AG04450 (cell line): ENCODE measurements at regions of chr1 and their contacts with region 1.

Region 1: GRCh38 chr1:175154629-175155472 is 37.7 kb downstream of the KIAA0040 start:
- DNase-seq: no peak
- H3K4me3 ChIP-seq: no peak overlapping the region
- H3K27ac ChIP-seq: no peak overlapping the region
- H3K27me3 ChIP-seq: peaks cover 4% of the 10 kb centered on the region
- CTCF ChIP-seq: peak; percentile 84

Region 2: GRCh38 chr1:175023043-175023921 is 131.6 kb before region 1 on chr1 and contains the start of gene MRPS14:
- CTCF ChIA-PET with region 1: interaction called, 11 read pairs
- POLR2A ChIA-PET with region 1: no interaction called
- DNase-seq: peak; percentile 98
- H3K4me3 ChIP-seq: peak within 1 kb of the TSS; percentile 96
- H3K27ac ChIP-seq: peak within 1 kb of the TSS; percentile 80
- H3K27me3 ChIP-seq: no peaks in the 10 kb centered on the region
- CTCF ChIP-seq: no peak
- polyA plus RNA-seq, gene MRPS14: 37.4 and 40.8 TPM in 2 replicates

Region 3: DNA sequence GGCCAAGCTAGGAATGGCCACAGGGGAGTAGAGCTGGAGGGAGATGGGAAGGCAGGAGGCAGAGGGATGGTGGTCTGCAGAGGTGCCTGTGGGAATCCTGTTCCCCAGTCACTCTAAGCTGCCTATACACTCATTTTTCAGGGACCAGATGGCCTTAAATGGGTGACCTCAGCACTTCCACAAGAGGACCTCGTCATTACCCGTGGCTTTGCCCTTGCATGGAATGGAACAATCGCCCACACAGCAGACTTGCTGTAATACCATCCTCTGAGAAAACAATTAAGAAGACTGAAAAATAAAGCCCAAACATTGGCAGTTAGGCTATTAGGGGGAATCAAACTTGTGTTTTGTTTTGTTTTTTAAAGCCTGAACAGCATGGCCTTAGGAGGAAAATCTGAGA is 100.1 kb before region 1 on chr1:
- CTCF ChIA-PET with region 1: no interaction called
- POLR2A ChIA-PET with region 1: no interaction called
- DNase-seq: no peak
- H3K4me3 ChIP-seq: no peak overlapping the region
- H3K27ac ChIP-seq: no peak overlapping the region
- H3K27me3 ChIP-seq: no peaks in the 10 kb centered on the region
- CTCF ChIP-seq: no peak

Region 4: GRCh38 chr1:175075572-175076568 is 79.0 kb before region 1 on chr1:
- CTCF ChIA-PET with region 1: no interaction called
- POLR2A ChIA-PET with region 1: no interaction called
- DNase-seq: no peak
- H3K4me3 ChIP-seq: no peak overlapping the region
- H3K27ac ChIP-seq: no peak overlapping the region
- H3K27me3 ChIP-seq: no peaks in the 10 kb centered on the region
- CTCF ChIP-seq: no peak

Region 5: GRCh38 chr1:175124861-175125260 is 30.0 kb before region 1 on chr1:
- CTCF ChIA-PET with region 1: interaction called, 10 read pairs
- POLR2A ChIA-PET with region 1: no interaction called
- DNase-seq: no peak
- H3K4me3 ChIP-seq: no peak overlapping the region
- H3K27ac ChIP-seq: no peak overlapping the region
- H3K27me3 ChIP-seq: peaks cover 4% of the 10 kb centered on the region
- CTCF ChIP-seq: no peak

Region 6: GRCh38 chr1:175129997-175130648 is 24.7 kb before region 1 on chr1:
- CTCF ChIA-PET with region 1: interaction called, 10 read pairs
- POLR2A ChIA-PET with region 1: no interaction called
- DNase-seq: no peak
- H3K4me3 ChIP-seq: no peak overlapping the region
- H3K27ac ChIP-seq: no peak overlapping the region
- H3K27me3 ChIP-seq: no peaks in the 10 kb centered on the region
- CTCF ChIP-seq: no peak

Region 7: GRCh38 chr1:175138579-175138978 is 16.3 kb before region 1 on chr1:
- CTCF ChIA-PET with region 1: interaction called, 28 read pairs
- POLR2A ChIA-PET with region 1: no interaction called
- DNase-seq: no peak
- H3K4me3 ChIP-seq: no peak overlapping the region
- H3K27ac ChIP-seq: no peak overlapping the region
- H3K27me3 ChIP-seq: no peaks in the 10 kb centered on the region
- CTCF ChIP-seq: no peak

Region 8: DNA sequence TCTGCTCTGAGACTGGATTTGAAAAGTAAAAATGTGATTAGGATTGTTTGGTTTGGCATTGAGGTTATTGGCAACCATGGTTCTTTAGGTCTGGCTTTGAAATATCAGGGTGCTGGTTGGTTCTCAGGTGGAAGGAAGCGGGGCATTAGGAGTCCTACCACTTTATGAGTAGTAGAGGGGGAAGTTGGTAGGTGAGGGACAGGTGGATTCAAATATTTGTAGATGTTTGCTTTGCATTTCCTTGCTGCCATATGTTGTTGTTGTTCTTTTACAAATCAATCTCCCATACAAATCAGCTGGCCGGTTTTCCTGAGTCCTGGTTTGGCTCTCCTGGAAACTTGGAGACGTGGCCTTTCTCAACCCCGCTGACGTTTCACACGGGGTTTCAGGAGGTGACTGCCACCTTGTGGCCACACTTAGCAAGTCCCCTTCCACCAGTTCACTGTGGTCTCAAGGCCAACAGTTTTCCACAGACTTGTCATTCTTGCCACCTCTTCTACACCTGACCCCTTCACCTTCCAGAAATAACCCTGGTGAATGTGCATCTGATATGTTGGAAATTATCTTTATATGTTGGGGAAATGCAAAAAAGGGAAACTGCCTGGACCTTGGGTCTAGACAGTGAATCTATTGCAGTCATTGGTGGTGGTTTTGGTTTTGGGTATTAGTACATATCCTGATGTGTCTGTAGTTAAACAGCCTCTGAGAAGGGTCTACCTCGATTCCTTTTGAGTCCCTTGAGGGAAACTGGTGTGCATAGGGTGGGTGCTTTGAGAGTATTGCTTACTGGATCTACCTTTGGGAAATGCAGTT is 164.8 kb after region 1 on chr1:
- CTCF ChIA-PET with region 1: interaction called, 101 read pairs
- POLR2A ChIA-PET with region 1: no interaction called
- DNase-seq: peak; percentile 23
- H3K4me3 ChIP-seq: no peak overlapping the region
- H3K27ac ChIP-seq: no peak overlapping the region
- H3K27me3 ChIP-seq: no peaks in the 10 kb centered on the region
- CTCF ChIP-seq: peak; percentile 81

Region 9: GRCh38 chr1:176843352-176844297 is 1688.8 kb after region 1 on chr1:
- CTCF ChIA-PET with region 1: interaction called, 11 read pairs
- POLR2A ChIA-PET with region 1: no interaction called
- DNase-seq: peak; percentile 0
- H3K4me3 ChIP-seq: no peak overlapping the region
- H3K27ac ChIP-seq: no peak overlapping the region
- H3K27me3 ChIP-seq: no peaks in the 10 kb centered on the region
- CTCF ChIP-seq: peak; percentile 36; the same call in 1 of the 2 replicates